ENCODE measurements at regions of chr12 and their contacts with region 1.

Region 1: GRCh38 chr12:106386813-106387535 is 29.4 kb downstream of the POLR3B start:
- DNase-seq: no peak

Region 2: DNA sequence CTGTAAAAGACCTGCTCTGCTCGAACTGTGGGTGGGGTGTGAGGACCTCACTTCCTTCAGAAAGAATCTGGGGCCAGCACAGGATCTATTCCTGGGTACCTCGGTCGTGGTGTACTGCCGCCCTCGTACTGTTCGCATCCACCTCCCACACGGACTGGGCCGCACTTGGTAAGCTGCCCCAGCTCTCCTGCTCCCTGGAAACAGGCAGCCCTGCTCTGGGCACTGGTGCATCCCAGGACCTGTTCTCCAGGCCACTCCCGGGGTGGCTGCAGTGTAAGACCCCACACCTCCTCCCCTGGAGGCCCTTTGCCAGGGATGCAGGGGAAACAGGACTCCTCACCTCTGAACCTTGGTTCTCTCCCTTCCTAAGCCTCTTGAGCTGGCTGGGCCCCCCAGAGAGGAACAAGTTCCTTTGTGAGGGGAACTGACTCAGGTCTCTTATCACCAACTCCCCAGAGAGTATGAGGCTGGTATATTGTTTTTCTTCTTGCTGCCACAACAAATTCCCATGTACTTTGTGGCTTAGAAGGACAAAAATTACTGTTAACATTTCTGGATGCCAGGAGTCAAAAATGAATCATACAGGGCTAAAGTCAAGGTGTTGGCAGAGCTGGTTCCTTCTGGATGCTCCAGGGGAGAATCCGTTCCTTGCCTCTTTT is 524.7 kb before region 1 on chr12:
- intact Hi-C with region 1: no loop called
- DNase-seq: peak in 8 of 10 donors; percentile 37 to 92 (median 70)

Region 3: GRCh38 chr12:106841510-106842302 is 454.7 kb after region 1 on chr12:
- intact Hi-C with region 1: loop called (anchors 1 kb)
- DNase-seq: peak in 4 of 10 donors; percentile 19 to 37 (median 22)

Region 4: DNA sequence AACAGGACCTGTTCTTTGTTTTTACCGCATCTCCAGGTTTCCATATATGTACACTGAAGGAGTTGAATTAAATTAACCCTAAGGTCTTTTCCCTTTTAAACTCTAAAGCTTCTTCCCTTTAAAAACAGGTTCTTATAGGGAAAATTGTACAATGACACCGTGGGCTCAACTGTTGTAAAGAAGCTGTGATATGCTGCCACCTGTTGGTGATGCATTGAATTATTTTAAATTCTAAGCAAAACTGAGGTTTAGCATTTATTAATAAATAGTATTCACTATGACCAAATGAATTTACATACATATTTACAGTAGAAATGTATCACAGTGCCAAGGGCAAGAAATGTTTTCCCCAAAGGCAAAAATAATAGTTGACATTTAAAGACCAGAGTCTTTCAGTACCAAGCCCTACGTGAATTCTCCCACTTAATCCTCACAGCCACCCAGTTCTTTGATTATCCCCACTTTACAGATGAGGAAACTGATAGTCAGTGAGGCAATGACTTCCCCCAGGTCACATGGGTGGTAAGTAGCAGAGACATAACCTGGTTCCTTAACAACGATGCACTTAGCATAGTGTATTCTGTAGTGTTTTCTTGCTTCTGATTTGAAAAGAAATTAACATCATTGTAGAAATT is 533.1 kb after region 1 on chr12:
- intact Hi-C with region 1: loop called (anchors 1 kb)
- DNase-seq: no peak

Measured in posterior cingulate gyrus (tissue), 11 donors.